CD8-positive, alpha-beta T cell (primary cell): ENCODE measurements at regions of chr19 and their contacts with region 1.

Region 1: DNA sequence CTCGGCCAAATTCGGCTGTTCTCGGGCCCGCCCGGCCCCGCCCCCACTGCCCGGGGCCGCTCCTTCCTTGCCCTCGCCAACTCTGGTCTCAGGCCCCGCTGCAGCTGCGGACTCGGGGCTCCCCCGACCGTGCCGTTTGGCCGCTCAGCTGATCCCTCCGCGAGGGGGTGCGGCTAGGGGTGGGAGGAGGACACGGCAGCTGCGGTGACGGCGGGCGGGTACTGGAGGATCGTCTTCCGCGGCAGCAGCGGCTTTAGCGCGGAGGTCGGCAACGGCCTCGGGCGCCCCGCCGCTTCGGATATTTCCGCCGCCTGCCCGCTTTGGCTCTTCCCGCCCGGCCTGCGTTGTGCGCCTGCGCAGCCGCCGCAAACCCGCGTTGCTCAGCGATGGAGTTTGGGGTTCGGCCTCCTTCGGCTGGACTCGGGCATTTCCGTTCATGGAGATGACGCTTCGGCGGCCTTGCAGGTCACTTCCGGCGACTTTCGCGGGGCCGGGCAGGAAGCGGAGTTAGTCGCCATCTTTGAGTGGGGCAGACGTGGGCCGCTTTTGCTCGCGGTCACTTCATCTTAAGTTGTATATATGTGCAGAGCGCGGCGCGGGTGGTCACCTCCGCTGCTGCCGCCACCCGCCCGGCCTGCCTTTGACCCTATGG is 338 bp upstream of the UBE2M start:
- DNase-seq: peak; percentile 99 to 100 (median 100)
- ATAC-seq: peak; percentile 69
- H3K4me3 ChIP-seq: peak overlapping the region; percentile 61 to 96
- H3K4me3 Mint-ChIP-seq: peak overlapping the region; percentile 97
- H3K27ac ChIP-seq: peak overlapping the region; percentile 88 to 91
- H3K27ac Mint-ChIP-seq: peak overlapping the region; percentile 98
- H3K4me1 ChIP-seq: peaks cover 60% of the 10 kb centered on the region
- H3K4me1 Mint-ChIP-seq: peaks cover 72% of the 10 kb centered on the region
- H3K27me3 ChIP-seq: no peaks in the 10 kb centered on the region
- H3K27me3 Mint-ChIP-seq: no peaks in the 10 kb centered on the region
- CTCF ChIP-seq: no peak

Region 2: GRCh38 chr19:58572818-58573657 is 14.3 kb after region 1 on chr19 and contains the start of gene MZF1:
- CTCF ChIA-PET with region 1: interaction called, 9 read pairs
- POLR2A ChIA-PET with region 1: interaction called, 34 read pairs
- intact Hi-C with region 1: loop called (anchors 1 kb)
- DNase-seq: peak; percentile 99 to 100 (median 99)
- ATAC-seq: peak; percentile 70
- H3K4me3 ChIP-seq: peak within 1 kb of the TSS; percentile 83 to 84
- H3K4me3 Mint-ChIP-seq: peak within 1 kb of the TSS; percentile 98
- H3K27ac ChIP-seq: peak within 1 kb of the TSS; percentile 98 to 100
- H3K27ac Mint-ChIP-seq: peak within 1 kb of the TSS; percentile 99
- H3K4me1 ChIP-seq: peaks cover 22% of the 10 kb centered on the region
- H3K4me1 Mint-ChIP-seq: peaks cover 30% of the 10 kb centered on the region
- H3K27me3 ChIP-seq: no peaks in the 10 kb centered on the region
- H3K27me3 Mint-ChIP-seq: no peaks in the 10 kb centered on the region
- CTCF ChIP-seq: no peak
- total RNA-seq, gene MZF1: 14.1 to 15.0 TPM